Spleen (tissue), 13 donors: ENCODE measurements at regions of chrX and their contacts with region 1.

Region 1: DNA sequence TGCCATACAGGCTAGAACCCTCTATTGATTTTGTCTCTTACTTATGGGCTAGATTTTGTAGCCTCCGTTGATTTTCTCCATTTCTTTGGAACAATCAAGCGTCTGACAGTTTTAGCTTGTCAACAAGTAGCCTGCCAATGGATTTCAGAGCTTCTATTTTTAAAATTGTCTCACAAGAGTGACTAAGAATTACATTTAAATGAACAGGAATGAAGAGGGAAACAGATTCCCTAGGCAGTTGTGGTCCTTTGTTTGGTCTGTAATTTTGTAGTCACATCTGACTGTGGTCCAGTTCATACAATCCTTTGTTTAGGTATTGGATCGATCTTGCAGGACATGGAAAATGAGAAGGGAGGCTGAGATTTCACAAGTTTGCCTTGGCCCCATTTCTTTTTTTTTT is 86.7 kb upstream of the EGFL6 start:
- DNase-seq: no peak
- H3K4me3 ChIP-seq: no peak overlapping the region
- H3K27ac ChIP-seq: no peak overlapping the region
- H3K4me1 ChIP-seq: peaks cover 0 to 14% (median 7%) of the 10 kb centered on the region in 6 donors
- H3K27me3 ChIP-seq: peaks cover 0 to 4% (median 0%) of the 10 kb centered on the region in 7 donors
- CTCF ChIP-seq: no peak
- POLR2A ChIP-seq: no peak

Region 2: DNA sequence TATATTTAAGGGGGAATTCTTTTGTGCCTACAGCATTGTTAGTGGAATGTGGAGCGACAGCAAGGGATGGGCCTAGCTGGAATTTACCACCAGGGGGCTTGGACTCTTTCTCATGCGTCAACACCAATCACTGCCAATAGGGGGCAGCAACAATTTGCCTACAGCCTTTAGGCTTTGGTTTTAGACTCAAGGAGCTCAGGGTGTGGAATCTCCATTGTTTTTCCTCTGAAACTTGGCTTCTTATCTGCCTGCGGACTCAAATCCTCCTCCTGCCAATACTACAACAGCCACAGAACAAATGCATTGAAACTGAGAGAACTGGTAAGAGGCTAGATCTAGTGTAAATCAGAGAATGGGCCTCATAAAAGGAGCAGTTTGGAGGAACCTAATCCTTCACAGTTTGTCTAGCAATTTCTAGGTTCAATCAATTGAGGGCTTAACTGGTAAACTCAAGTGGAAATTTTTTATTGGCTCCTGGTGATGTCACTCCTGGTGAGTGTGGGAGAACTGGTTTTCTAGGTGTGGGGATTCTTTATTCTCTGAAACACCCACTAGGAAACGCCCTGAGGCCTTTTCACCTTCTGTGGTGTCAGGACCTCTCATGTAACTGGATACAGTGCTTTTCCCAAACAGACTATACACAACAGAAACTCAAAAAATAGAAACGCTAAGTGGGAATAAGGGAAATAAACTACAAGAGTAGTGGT is 535.8 kb before region 1 on chrX:
- intact Hi-C with region 1: loop called (anchors 5 kb)
- DNase-seq: no peak
- H3K4me3 ChIP-seq: no peak overlapping the region
- H3K27ac ChIP-seq: peak overlapping the region; percentile 63 to 96 (median 90)
- H3K4me1 ChIP-seq: peaks cover 38 to 59% (median 52%) of the 10 kb centered on the region in 6 donors
- H3K27me3 ChIP-seq: peaks cover 0 to 5% (median 0%) of the 10 kb centered on the region in 7 donors
- CTCF ChIP-seq: peak; percentile 89 to 99 (median 96)
- POLR2A ChIP-seq: no peak